Naive thymus-derived CD4-positive, alpha-beta T cell (primary cell): ENCODE measurements at regions of chr17 and their contacts with region 1.

Region 1: GRCh38 chr17:45428050-45428617 is 4.5 kb downstream of the ARHGAP27 start:
- DNase-seq: peak; percentile 62 to 93 (median 81)
- ATAC-seq: peak; percentile 87
- H3K4me3 ChIP-seq: peak overlapping the region; percentile 17
- H3K4me3 Mint-ChIP-seq: peak overlapping the region; percentile 70 to 81 (median 78)
- H3K27ac ChIP-seq: no peak overlapping the region
- H3K27ac Mint-ChIP-seq: peak overlapping the region in 5 of 9 donors; percentile 3 to 82 (median 15)
- H3K4me1 ChIP-seq: peaks cover 11 to 14% of the 10 kb centered on the region in 2 donors
- H3K4me1 Mint-ChIP-seq: peaks cover 14 to 27% (median 25%) of the 10 kb centered on the region in 7 donors
- H3K27me3 ChIP-seq: no peaks in the 10 kb centered on the region
- H3K27me3 Mint-ChIP-seq: no peaks in the 10 kb centered on the region

Region 2: DNA sequence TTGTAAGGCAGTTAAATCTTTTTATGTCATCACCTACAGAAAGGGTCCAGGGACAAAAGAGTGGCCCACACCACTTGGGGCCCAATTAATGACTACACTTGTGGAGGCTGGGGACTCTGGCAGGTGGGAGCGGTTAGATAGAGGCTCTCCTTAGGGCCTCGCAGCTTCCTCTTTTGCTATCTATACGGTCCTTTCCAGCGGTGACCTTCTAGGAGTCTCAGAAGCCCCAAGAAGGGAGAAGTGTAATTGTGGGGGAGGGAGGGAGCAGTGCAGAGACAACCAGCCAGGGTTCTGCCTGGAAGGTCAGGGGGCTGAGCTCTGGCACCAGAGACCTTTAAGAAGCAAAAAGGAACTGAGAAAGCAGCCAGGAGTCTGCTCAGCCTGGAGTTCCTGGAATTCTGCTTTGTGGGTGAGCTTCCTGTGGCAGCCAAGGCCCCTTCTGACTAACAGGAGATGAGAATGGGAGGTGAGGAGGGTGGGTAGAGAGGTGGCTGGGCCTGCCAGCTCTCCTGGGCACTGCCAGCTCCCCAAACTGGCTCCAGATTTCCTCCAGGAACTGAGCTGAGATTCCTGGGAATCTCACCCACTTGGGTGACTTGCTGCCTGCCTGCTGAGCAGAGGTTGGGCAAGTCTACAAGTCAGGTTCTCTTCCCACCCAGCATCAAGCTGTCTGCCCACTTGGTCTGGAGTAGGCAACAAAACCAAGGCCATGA is 95.0 kb before region 1 on chr17:
- CTCF ChIA-PET with region 1: no interaction called
- POLR2A ChIA-PET with region 1: no interaction called
- intact Hi-C with region 1: no loop called
- DNase-seq: no peak
- ATAC-seq: peak; percentile 69
- H3K4me3 ChIP-seq: no peak overlapping the region
- H3K4me3 Mint-ChIP-seq: peak overlapping the region in 1 of 10 donors; percentile 60
- H3K27ac ChIP-seq: no peak overlapping the region
- H3K27ac Mint-ChIP-seq: peak overlapping the region in 1 of 9 donors; percentile 66
- H3K4me1 ChIP-seq: no peaks in the 10 kb centered on the region
- H3K4me1 Mint-ChIP-seq: peaks cover 0 to 26% (median 0%) of the 10 kb centered on the region in 7 donors
- H3K27me3 ChIP-seq: no peaks in the 10 kb centered on the region
- H3K27me3 Mint-ChIP-seq: no peaks in the 10 kb centered on the region

Region 3: DNA sequence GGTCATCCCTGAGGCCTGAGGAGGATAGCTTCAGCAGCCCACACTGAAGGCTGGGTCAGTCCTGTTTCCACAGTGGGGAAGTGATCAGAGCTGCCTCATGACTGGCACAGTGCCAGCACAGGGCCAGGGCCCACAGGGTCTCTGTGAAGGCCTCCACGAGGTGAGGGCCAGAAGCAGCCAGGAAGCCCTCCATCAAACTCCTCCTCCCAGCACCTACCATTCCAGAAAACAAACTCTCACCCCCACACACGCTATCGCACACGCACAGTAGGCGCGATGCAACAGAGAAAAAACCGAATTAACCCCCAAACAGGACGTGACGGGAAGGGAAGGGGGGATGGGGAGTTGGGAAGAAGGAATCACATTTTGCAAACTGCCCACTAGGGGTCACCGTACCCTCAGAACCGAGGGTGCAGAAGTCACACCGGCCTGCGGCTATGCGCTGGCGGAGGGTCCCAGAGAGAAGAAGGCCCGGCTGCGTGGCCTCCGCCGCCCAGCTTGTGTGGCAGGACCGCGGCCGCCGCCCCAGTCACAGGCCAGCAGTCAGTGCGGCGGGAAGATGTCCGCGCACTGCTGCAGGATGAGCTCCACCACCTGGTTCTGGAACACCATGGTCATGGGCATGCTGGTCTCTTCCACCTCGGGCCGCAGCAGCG is 33.1 kb before region 1 on chr17:
- CTCF ChIA-PET with region 1: interaction called, 4 read pairs
- POLR2A ChIA-PET with region 1: interaction called, 3 read pairs
- intact Hi-C with region 1: loop called in 1 of 2 experiments (anchors 2 kb)
- DNase-seq: peak in 7 of 9 donors; percentile 26 to 54 (median 44)
- ATAC-seq: peak; percentile 69
- H3K4me3 ChIP-seq: no peak overlapping the region
- H3K4me3 Mint-ChIP-seq: peak overlapping the region in 2 of 10 donors; percentile 21 to 43
- H3K27ac ChIP-seq: no peak overlapping the region
- H3K27ac Mint-ChIP-seq: peak overlapping the region in 4 of 9 donors; percentile 12 to 67 (median 52)
- H3K4me1 ChIP-seq: no peaks in the 10 kb centered on the region
- H3K4me1 Mint-ChIP-seq: peaks cover 0 to 13% (median 6%) of the 10 kb centered on the region in 7 donors
- H3K27me3 ChIP-seq: no peaks in the 10 kb centered on the region
- H3K27me3 Mint-ChIP-seq: no peaks in the 10 kb centered on the region

Region 4: DNA sequence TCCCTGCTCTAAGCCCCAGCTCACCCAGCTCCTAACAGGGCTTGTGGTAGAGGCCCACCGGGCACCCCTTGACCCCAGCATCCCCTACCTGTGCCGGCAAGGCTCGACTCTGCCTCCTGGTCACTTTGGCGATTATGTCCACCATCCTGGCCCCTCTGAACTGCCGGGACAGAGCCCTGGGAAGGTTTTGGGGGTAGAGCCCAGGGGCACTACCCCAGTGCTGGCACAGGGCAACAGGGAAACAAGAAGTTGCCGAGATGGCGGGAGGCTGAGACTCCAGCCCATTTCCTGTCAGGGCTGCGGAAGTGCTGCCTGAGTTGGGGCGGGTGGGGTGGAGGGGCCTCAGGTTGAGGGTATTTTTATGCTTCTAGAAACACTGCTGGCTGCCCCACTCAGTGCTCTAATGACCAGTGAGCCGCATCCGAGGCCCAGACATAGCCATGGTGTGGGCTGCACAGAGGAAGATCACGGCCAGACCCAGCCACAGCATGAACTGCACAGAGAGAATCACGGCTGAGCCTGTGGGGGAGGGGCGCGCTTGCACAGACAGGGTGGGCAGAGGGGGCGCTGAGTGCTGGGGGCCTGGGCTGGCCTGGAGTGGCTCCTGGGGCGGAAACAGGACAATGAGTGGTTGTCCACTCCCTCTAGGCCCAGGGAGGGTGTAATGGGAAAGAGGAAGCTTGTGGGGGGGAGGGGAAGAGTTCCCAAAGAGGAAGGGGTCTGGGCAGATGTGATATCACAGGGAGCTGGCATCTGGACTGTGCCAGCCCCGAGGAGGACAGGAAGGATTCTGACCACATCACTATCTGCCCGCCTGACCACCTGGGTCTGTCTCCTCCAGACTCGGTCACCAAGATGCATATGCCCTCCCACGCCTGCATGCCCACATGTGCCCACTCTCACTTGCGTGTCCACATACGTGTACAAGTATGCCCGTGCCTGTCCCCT is 17.7 kb before region 1 on chr17:
- CTCF ChIA-PET with region 1: interaction called, 4 read pairs
- POLR2A ChIA-PET with region 1: interaction called, 7 read pairs
- intact Hi-C with region 1: loop called (anchors 2 kb)
- DNase-seq: peak in 8 of 9 donors; percentile 55 to 66 (median 60)
- ATAC-seq: peak; percentile 79
- H3K4me3 ChIP-seq: peak overlapping the region; percentile 96
- H3K4me3 Mint-ChIP-seq: peak overlapping the region; percentile 97 to 100 (median 99)
- H3K27ac ChIP-seq: peak overlapping the region; percentile 94
- H3K27ac Mint-ChIP-seq: peak overlapping the region; percentile 96 to 99 (median 99)
- H3K4me1 ChIP-seq: peaks cover 29 to 45% of the 10 kb centered on the region in 2 donors
- H3K4me1 Mint-ChIP-seq: peaks cover 40 to 63% (median 60%) of the 10 kb centered on the region in 7 donors
- H3K27me3 ChIP-seq: no peaks in the 10 kb centered on the region
- H3K27me3 Mint-ChIP-seq: no peaks in the 10 kb centered on the region